CD14-positive monocyte (primary cell): ENCODE measurements at regions of chr13 and their contacts with region 1.

Region 1: DNA sequence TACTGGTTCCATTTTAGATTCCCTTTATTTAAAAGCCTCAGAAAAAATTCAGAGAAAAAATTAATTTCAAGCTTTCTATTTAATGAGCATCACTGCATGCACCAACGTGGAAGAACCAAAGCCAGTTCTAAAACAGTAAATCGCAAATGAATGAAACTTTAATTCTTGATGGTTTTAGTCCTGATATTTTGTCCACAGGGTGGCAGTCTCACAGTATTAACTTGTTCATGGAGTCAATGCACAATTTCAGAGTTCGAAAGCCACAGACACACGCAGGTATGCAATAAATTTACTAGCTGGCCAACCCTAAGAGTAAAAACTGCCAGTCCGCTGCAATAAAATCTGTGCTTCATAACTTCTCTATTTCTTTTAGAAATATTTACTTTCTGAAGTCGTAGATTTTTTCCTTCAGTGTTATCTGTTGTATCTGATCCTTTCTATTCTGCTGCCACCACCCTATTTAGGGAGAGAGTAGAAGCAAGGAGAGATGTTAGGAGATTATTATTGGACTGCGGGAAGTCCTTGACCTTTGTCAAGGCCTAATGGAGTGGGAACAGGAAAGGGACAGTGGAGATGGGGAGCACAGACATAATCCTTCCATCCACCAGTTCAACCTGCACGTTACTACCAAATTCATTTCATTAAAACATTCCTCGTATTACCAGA is 7.0 kb upstream of the WBP4 start:
- DNase-seq: peak in 2 of 3 donors; percentile 62 to 68
- H3K4me3 ChIP-seq: peak overlapping the region in 1 of 3 experiments; percentile 58
- H3K4me3 Mint-ChIP-seq: peak overlapping the region in 1 of 2 donors; percentile 20
- H3K27ac ChIP-seq: peak overlapping the region in 1 of 2 donors; percentile 89
- H3K27ac Mint-ChIP-seq: peak overlapping the region; percentile 86 to 99 (median 98)
- H3K4me1 ChIP-seq: peaks cover 57 to 87% of the 10 kb centered on the region in 2 donors
- H3K4me1 Mint-ChIP-seq: peaks cover 70% of the 10 kb centered on the region
- H3K27me3 ChIP-seq: no peaks in the 10 kb centered on the region
- H3K27me3 Mint-ChIP-seq: peaks cover 0 to 2% (median 0%) of the 10 kb centered on the region in 3 donors
- CTCF ChIP-seq: peak; percentile 78

Region 2: GRCh38 chr13:41004875-41005693 is 49.3 kb before region 1 on chr13:
- intact Hi-C with region 1: loop called in 1 of 2 experiments (anchors 10 kb)
- DNase-seq: peak in 1 of 3 donors; percentile 44
- H3K4me3 ChIP-seq: peak overlapping the region in 2 of 3 experiments; percentile 12 to 47
- H3K4me3 Mint-ChIP-seq: peak overlapping the region; percentile 60 to 69
- H3K27ac ChIP-seq: peak overlapping the region in 1 of 2 donors; percentile 81
- H3K27ac Mint-ChIP-seq: peak overlapping the region; percentile 86 to 93 (median 91)
- H3K4me1 ChIP-seq: peaks cover 60 to 89% of the 10 kb centered on the region in 2 donors
- H3K4me1 Mint-ChIP-seq: peaks cover 66% of the 10 kb centered on the region
- H3K27me3 ChIP-seq: no peaks in the 10 kb centered on the region
- H3K27me3 Mint-ChIP-seq: no peaks in the 10 kb centered on the region
- CTCF ChIP-seq: no peak

Region 3: DNA sequence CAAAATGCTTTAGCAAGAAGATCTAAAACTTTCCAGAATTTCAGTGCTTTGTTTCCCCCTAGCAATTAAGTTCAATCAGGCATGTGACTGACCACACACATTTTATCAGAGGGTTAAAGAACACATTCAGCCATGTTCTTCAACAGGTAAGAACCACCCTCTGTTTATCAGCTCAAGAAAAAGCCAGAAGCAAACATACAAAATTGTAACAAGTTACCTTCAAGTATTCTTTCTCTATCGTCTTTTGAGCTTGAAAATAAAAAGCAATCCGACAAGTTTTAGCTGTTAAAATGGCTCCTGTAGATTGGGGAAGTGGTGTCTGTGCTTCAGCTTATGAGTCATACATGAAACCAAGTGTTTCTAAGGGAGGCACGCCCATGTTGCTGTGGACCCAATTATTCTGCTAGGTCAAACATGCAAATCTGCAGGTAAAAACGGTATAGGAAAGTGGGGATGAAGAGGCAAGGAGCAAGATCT is 35.3 kb before region 1 on chr13 and contains the start of gene ELF1:
- intact Hi-C with region 1: loop called in 1 of 2 experiments (anchors 5 kb)
- DNase-seq: peak; percentile 89 to 94 (median 94)
- H3K4me3 ChIP-seq: peak within 1 kb of the TSS; percentile 86 to 100 (median 89)
- H3K4me3 Mint-ChIP-seq: peak within 1 kb of the TSS; percentile 83 to 93
- H3K27ac ChIP-seq: peak within 1 kb of the TSS; percentile 71 to 100
- H3K27ac Mint-ChIP-seq: peak within 1 kb of the TSS; percentile 97 to 100 (median 99)
- H3K4me1 ChIP-seq: peaks cover 32 to 38% of the 10 kb centered on the region in 2 donors
- H3K4me1 Mint-ChIP-seq: peaks cover 38% of the 10 kb centered on the region
- H3K27me3 ChIP-seq: no peaks in the 10 kb centered on the region
- H3K27me3 Mint-ChIP-seq: no peaks in the 10 kb centered on the region
- CTCF ChIP-seq: no peak
- polyA plus RNA-seq, gene ELF1: 63.1 to 83.3 (median 83.3) TPM

Region 4: GRCh38 chr13:41032691-41033376 is 21.5 kb before region 1 on chr13:
- intact Hi-C with region 1: loop called in 1 of 2 experiments (anchors 2 kb)
- DNase-seq: peak; percentile 68 to 76 (median 73)
- H3K4me3 ChIP-seq: no peak overlapping the region
- H3K4me3 Mint-ChIP-seq: no peak overlapping the region
- H3K27ac ChIP-seq: peak overlapping the region; percentile 74 to 81
- H3K27ac Mint-ChIP-seq: peak overlapping the region; percentile 78 to 95 (median 93)
- H3K4me1 ChIP-seq: peaks cover 25 to 32% of the 10 kb centered on the region in 2 donors
- H3K4me1 Mint-ChIP-seq: peaks cover 31% of the 10 kb centered on the region
- H3K27me3 ChIP-seq: no peaks in the 10 kb centered on the region
- H3K27me3 Mint-ChIP-seq: no peaks in the 10 kb centered on the region
- CTCF ChIP-seq: no peak

Region 5: GRCh38 chr13:41075034-41075433 is 20.7 kb after region 1 on chr13:
- intact Hi-C with region 1: no loop called
- DNase-seq: peak in 2 of 3 donors; percentile 33 to 39
- H3K4me3 ChIP-seq: no peak overlapping the region
- H3K4me3 Mint-ChIP-seq: no peak overlapping the region
- H3K27ac ChIP-seq: no peak overlapping the region
- H3K27ac Mint-ChIP-seq: no peak overlapping the region
- H3K4me1 ChIP-seq: no peaks in the 10 kb centered on the region
- H3K4me1 Mint-ChIP-seq: no peaks in the 10 kb centered on the region
- H3K27me3 ChIP-seq: no peaks in the 10 kb centered on the region
- H3K27me3 Mint-ChIP-seq: peaks cover 0 to 1% (median 0%) of the 10 kb centered on the region in 3 donors
- CTCF ChIP-seq: peak; percentile 69